ENCODE measurements at regions of chr13 and their contacts with region 1.

Region 1: GRCh38 chr13:45417790-45418534 is at the start of gene SLC25A30:
- DNase-seq: peak; percentile 76 to 90
- ATAC-seq: peak; percentile 96 to 97
- H3K4me3 ChIP-seq: peak within 1 kb of the TSS; percentile 56
- H3K27ac ChIP-seq: peak within 1 kb of the TSS; percentile 66 to 96
- H3K4me1 ChIP-seq: peaks cover 33% of the 10 kb centered on the region
- CTCF ChIP-seq: no peak
- EP300 ChIP-seq: no peak
- POLR2A ChIP-seq: peak; percentile 52
- RAD21 ChIP-seq: no peak
- polyA plus RNA-seq, gene SLC25A30: 11.2 and 12.7 TPM in 2 replicates

Region 2: GRCh38 chr13:45464687-45465453 is 46.9 kb after region 1 on chr13 and contains the start of gene COG3:
- CTCF ChIA-PET with region 1: interaction called, 3 read pairs
- POLR2A ChIA-PET with region 1: interaction called, 15 read pairs
- DNase-seq: peak; percentile 94
- ATAC-seq: peak; percentile 99
- H3K4me3 ChIP-seq: peak within 1 kb of the TSS; percentile 90
- H3K27ac ChIP-seq: peak within 1 kb of the TSS; percentile 91 to 100
- H3K4me1 ChIP-seq: peaks cover 8% of the 10 kb centered on the region; the same call in 1 of the 3 replicates
- CTCF ChIP-seq: no peak
- EP300 ChIP-seq: no peak
- POLR2A ChIP-seq: peak; percentile 54
- RAD21 ChIP-seq: no peak
- polyA plus RNA-seq, gene COG3: 20.0 and 23.3 TPM in 2 replicates